ENCODE measurements at regions of chr9 and their contacts with region 1.

Region 1: GRCh38 chr9:36163049-36163785 is 6.0 kb upstream of the CCIN start:
- DNase-seq: peak in 1 of 2 donors; percentile 96
- H3K4me3 ChIP-seq: no peak overlapping the region
- H3K27ac ChIP-seq: peak overlapping the region; percentile 52 to 83 (median 74)
- H3K4me1 ChIP-seq: peaks cover 7 to 71% (median 32%) of the 10 kb centered on the region in 4 donors
- H3K27me3 ChIP-seq: peaks cover 0 to 6% (median 0%) of the 10 kb centered on the region in 3 donors
- CTCF ChIP-seq: no peak
- EP300 ChIP-seq: no peak
- POLR2A ChIP-seq: no peak

Region 2: GRCh38 chr9:36102742-36103495 is 60.3 kb before region 1 on chr9:
- intact Hi-C with region 1: loop called (anchors 5 kb)
- DNase-seq: peak; percentile 88 to 93
- H3K4me3 ChIP-seq: no peak overlapping the region
- H3K27ac ChIP-seq: peak overlapping the region in 4 of 5 donors; percentile 16 to 55 (median 40)
- H3K4me1 ChIP-seq: peaks cover 0 to 13% (median 0%) of the 10 kb centered on the region in 4 donors
- H3K27me3 ChIP-seq: no peaks in the 10 kb centered on the region
- CTCF ChIP-seq: peak in 5 of 7 experiments; percentile 65 to 84 (median 82)
- EP300 ChIP-seq: no peak
- POLR2A ChIP-seq: no peak

Region 3: DNA sequence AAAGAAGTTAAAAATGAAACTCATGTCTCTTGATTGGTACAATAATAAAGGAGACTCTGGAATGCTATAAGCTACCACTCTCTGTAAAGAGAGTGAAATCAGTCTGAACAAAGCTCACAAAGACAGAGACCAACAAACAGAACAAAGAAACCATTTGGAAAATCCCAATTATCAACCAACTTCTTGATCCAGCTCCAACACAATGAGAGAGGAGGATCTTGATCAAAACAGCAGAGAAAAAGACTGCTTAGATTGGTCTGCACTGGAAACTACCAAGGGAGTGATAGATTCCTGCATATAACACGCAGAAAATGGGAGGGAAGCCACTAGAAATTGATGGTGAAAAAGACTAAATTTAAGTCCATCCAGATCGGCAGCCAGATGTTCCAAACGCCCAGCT is 260.0 kb after region 1 on chr9:
- intact Hi-C with region 1: no loop called
- DNase-seq: no peak
- H3K4me3 ChIP-seq: no peak overlapping the region
- H3K27ac ChIP-seq: no peak overlapping the region
- H3K4me1 ChIP-seq: peaks cover 9 to 19% (median 15%) of the 10 kb centered on the region in 4 donors
- H3K27me3 ChIP-seq: no peaks in the 10 kb centered on the region
- CTCF ChIP-seq: no peak
- EP300 ChIP-seq: no peak
- POLR2A ChIP-seq: no peak

Measured in stomach (tissue), 19 donors.